Common myeloid progenitor, CD34-positive (primary cell): ENCODE measurements at regions of chr1 and their contacts with region 1.

Region 1: GRCh38 chr1:2227346-2228153 is 569 bp upstream of the SKI start:
- DNase-seq: peak; percentile 94 to 97 (median 97)
- H3K4me3 ChIP-seq: peak overlapping the region; percentile 26 to 70 (median 61)
- H3K27ac ChIP-seq: peak overlapping the region in 1 of 2 experiments; percentile 49
- H3K4me1 ChIP-seq: peaks cover 0 to 57% (median 53%) of the 10 kb centered on the region in 4 experiments
- H3K27me3 ChIP-seq: peaks cover 0 to 11% (median 4%) of the 10 kb centered on the region in 5 experiments

Region 2: GRCh38 chr1:2194898-2195673 is 32.5 kb before region 1 on chr1:
- CTCF ChIA-PET with region 1: interaction called, 11 read pairs
- POLR2A ChIA-PET with region 1: interaction called, 26 read pairs
- DNase-seq: peak; percentile 78 to 88 (median 88)
- H3K4me3 ChIP-seq: peak overlapping the region; percentile 28 to 83 (median 67)
- H3K27ac ChIP-seq: peak overlapping the region; percentile 58 to 86
- H3K4me1 ChIP-seq: peaks cover 0 to 37% (median 35%) of the 10 kb centered on the region in 4 experiments
- H3K27me3 ChIP-seq: no peaks in the 10 kb centered on the region

Region 3: DNA sequence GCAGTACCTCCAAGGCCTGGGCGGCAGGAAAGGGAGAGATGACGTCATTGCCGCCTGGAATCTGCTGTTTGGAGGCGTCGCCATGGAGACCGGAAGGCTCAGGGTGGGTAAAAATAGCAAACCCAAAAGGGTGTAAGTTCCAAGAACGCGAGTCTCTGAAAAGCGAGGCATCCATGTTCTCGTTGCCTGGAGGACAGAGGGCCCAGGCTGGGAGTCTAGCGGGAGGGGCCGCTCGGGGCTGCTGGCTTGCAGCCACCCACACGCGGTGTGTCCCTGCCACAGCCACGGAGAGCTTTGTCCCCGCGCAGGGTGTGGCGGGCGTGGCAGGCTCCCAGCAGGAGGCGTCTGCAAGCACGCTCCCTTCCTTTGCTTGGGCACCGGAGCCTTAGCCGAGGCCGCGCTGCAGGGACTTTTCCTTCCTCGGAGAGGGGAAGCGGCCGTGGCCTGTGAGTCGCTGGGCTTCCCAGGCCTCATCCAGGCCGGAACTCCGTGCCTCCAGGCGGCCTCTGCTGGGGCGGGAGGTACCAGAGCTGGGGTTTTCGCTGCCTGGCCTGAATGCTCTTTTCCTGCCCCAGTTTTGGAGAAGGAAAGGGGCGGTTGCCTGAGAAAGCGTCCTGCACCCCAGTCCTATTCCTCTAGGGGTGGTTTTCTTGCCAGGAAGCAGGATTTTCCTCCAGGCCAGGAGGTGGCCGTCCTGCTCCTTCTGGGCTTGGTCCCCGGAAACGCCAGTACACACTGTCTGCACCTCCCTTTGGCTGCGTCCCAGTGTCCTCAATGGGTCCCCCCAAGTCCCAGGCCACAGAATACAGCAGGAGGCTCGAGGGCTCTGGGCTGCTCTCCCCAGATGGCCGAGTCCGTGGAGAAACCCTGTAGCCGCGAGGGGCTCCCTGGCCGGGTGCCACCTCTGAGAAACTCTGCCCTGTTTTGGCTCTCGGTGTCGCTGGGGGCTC is 14.7 kb before region 1 on chr1:
- CTCF ChIA-PET with region 1: interaction called, 9 read pairs
- POLR2A ChIA-PET with region 1: interaction called, 15 read pairs
- DNase-seq: peak; percentile 86 to 92 (median 91)
- H3K4me3 ChIP-seq: peak overlapping the region in 6 of 7 experiments; percentile 10 to 70 (median 42)
- H3K27ac ChIP-seq: peak overlapping the region; percentile 40 to 75
- H3K4me1 ChIP-seq: peaks cover 0 to 26% (median 25%) of the 10 kb centered on the region in 4 experiments
- H3K27me3 ChIP-seq: no peaks in the 10 kb centered on the region

Region 4: DNA sequence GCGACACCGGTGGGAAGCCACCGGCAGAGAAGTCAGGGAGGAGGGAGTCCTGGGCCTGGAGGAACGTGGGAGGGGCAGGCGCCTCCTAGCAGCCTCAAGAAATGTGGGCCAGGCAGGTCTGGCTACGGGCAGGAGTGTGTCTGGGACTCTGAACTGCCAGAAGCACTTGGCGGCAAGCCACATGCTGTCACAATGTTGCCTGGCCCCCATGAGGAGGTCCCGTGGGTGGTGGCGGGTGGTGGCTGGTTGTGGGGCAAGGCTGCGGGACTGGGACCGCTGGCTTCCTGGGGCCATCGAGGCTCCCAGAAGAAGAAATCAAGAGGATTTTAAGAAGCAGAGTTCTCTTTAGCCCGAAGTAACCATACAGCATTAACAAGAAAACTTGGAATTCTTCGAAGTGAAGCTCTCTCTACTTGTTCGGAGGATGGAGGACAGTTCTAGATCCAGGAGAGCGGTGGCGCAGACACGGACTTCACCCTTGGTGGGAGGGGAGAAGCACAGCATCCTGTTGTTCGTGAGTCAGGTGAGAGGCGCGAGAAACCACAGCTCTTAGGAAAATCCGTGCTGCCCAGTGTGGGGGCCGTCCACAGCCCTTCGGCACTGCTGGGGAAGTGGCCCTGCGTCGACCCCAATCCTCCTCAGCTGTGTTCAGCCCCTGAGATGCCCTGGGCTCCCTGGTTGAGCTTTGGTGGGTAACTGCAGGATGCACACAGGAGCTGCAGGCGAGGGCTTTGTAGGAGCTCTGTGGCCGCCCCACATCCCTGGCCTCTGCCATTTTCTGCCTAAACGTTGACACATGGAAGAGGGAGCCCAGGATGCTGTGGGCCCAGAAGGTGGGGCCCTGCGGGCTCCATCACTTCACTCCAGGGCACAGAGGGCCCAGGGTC is 13.0 kb after region 1 on chr1:
- CTCF ChIA-PET with region 1: interaction called, 24 read pairs
- POLR2A ChIA-PET with region 1: interaction called, 42 read pairs
- DNase-seq: peak in 2 of 3 donors; percentile 64 to 70
- H3K4me3 ChIP-seq: no peak overlapping the region
- H3K27ac ChIP-seq: no peak overlapping the region
- H3K4me1 ChIP-seq: peaks cover 0 to 50% (median 28%) of the 10 kb centered on the region in 4 experiments
- H3K27me3 ChIP-seq: no peaks in the 10 kb centered on the region

Region 5: GRCh38 chr1:2300851-2301606 is 73.5 kb after region 1 on chr1:
- CTCF ChIA-PET with region 1: no interaction called
- POLR2A ChIA-PET with region 1: interaction called, 16 read pairs
- DNase-seq: peak; percentile 99 to 100 (median 100)
- H3K4me3 ChIP-seq: peak overlapping the region in 6 of 7 experiments; percentile 19 to 68 (median 59)
- H3K27ac ChIP-seq: peak overlapping the region; percentile 93 to 95
- H3K4me1 ChIP-seq: peaks cover 0 to 82% (median 56%) of the 10 kb centered on the region in 4 experiments
- H3K27me3 ChIP-seq: no peaks in the 10 kb centered on the region

Region 6: DNA sequence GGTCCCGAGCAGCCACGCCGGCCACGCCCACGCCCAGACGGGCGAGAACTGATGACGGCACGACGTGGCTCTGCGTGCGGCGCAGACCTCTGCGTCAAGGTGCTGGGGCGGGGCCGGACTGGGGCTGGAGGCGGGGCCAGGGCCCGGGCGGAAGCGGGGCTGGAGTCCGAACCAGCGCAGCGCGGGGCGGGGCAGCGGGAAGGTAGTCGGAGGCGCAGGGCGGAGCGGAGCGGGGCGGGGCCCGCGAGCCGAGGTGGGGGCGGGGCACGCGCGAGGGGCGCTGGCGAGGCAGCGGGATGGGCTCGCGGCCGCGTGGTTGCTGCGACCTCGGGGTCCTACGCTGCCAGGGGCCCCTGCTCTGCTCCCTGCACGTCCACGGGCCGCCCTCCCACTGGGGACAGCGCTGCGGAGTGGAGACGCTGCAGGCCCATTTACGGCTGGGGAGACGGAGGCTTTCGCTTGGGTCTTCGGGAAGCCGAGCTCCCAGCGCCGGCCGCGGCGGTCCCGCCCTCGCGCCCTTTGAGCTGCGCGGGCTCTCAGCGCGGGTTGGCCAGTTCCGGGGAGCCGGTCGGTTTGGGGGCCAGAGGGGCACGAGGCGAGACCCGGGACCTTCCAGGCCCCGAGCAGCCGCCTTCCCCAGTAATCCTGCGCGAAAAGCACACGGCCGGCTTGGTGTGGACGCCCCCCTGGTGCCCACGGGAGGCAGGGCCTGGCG is 185.1 kb after region 1 on chr1 and contains the start of gene PEX10:
- CTCF ChIA-PET with region 1: no interaction called
- POLR2A ChIA-PET with region 1: no interaction called
- DNase-seq: peak; percentile 94 to 97 (median 97)
- H3K4me3 ChIP-seq: peak within 1 kb of the TSS; percentile 79 to 94 (median 90)
- H3K27ac ChIP-seq: peak within 1 kb of the TSS; percentile 64 to 83
- H3K4me1 ChIP-seq: peaks cover 0 to 51% (median 50%) of the 10 kb centered on the region in 4 experiments
- H3K27me3 ChIP-seq: peaks cover 0 to 4% (median 0%) of the 10 kb centered on the region in 5 experiments